Stomach (tissue), 19 donors: ENCODE measurements at regions of chr17 and their contacts with region 1.

Region 1: DNA sequence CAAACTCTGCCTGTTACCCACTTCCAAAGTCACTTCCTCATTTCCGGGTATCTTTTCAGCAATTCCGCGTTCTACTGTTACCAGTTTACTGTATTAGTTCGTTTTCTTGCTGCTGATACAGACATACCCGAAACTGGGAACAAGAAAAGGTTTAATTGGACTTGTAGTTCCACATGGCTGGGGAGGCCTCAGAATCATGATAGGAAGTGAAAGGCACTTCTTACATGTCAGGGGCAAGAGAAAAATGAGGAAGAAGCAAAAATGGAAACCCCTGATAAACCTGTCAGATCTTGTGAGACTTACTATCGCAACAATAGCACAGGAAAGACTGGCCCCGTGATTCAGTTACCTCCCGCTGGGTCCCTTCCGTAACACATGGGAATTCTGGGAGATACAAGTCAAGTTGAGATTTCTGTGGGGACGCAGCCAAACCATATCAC is 30.9 kb downstream of the PAFAH1B1 start:
- DNase-seq: no peak
- H3K4me3 ChIP-seq: no peak overlapping the region
- H3K27ac ChIP-seq: peak overlapping the region in 1 of 5 donors; percentile 11
- H3K4me1 ChIP-seq: peaks cover 4 to 95% (median 52%) of the 10 kb centered on the region in 4 donors
- H3K27me3 ChIP-seq: no peaks in the 10 kb centered on the region
- CTCF ChIP-seq: no peak
- EP300 ChIP-seq: no peak
- POLR2A ChIP-seq: no peak

Region 2: DNA sequence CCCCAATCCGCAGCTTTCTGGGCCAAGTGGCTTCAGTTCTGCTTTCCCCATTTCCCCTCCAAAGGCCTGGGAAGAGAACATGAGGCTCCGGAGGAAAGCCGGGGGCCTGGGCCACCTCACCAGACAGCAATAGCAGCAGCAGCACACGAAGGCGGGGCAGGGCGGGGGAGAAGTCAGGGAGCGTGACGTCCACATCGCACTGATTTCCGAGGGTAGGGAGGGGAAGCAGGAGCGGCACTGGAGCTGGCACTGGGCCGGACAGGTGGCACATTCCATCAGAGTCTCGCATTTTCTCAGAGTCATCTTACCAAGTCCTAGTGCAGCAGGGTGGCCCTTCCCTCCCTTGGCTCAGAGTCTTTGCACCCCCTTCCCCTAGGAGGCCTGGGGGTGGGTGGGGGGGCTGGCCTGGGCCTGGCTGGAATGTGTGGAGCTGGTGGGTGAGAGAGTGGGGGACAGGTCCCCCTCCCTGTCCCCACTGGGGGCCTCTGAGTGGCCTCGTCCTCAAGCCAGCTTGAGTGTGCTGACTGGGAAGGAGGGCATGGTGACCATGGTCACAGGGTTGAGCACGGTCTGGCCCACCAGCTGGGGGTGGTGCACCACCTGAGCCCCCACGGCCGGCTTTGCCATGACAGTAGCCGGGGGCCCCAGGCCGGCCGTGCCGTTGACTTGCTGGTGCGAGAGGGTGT is 237.8 kb before region 1 on chr17:
- intact Hi-C with region 1: no loop called
- DNase-seq: peak; percentile 76 to 89
- H3K4me3 ChIP-seq: no peak overlapping the region
- H3K27ac ChIP-seq: peak overlapping the region in 3 of 5 donors; percentile 37 to 55 (median 39)
- H3K4me1 ChIP-seq: peaks cover 35 to 80% (median 58%) of the 10 kb centered on the region in 4 donors
- H3K27me3 ChIP-seq: no peaks in the 10 kb centered on the region
- CTCF ChIP-seq: no peak
- EP300 ChIP-seq: no peak
- POLR2A ChIP-seq: no peak

Region 3: DNA sequence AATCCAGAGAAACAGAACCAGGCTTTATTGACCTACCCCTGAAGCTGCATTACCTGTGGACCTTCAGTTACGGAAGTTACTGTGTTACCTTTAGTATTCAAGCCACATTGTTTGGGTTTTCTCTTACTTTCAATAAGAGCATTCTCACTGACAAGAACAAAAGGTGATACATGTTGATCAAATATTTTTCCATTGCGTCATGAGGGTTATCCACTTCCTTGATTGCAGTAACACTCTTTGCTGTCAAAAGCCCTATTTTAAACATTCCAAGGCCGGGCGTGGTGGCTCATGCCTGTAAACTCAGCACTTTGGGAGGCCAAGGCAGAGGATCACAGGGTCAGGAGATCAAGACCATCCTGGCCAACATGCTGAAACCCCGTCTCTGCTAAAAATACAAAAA is 59.4 kb before region 1 on chr17:
- intact Hi-C with region 1: no loop called
- DNase-seq: peak; percentile 47 to 77
- H3K4me3 ChIP-seq: no peak overlapping the region
- H3K27ac ChIP-seq: peak overlapping the region; percentile 22 to 81 (median 56)
- H3K4me1 ChIP-seq: peaks cover 0 to 7% (median 3%) of the 10 kb centered on the region in 4 donors
- H3K27me3 ChIP-seq: no peaks in the 10 kb centered on the region
- CTCF ChIP-seq: no peak
- EP300 ChIP-seq: no peak
- POLR2A ChIP-seq: no peak

Region 4: DNA sequence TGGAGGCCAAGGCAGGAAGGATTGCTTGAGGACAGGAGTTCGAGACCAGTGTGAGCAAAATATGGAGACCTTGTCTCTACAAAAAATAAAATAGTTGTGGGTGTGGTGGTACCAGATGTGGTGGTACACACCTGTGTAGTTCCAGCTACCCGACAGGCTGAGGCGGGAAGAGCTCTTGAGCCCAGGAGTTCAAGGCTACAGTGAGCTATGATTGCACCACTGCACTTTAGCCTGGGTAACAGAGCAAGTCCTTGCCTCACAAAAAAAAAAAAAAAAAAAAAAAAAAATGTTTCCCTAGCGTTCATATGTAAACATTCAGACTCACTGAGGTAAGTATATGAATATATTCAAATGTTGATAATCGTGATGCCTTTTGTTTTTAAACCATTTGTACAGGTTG is 47.7 kb after region 1 on chr17:
- intact Hi-C with region 1: loop called (anchors 10 kb)
- DNase-seq: no peak
- H3K4me3 ChIP-seq: no peak overlapping the region
- H3K27ac ChIP-seq: no peak overlapping the region
- H3K4me1 ChIP-seq: no peaks in the 10 kb centered on the region
- H3K27me3 ChIP-seq: no peaks in the 10 kb centered on the region
- CTCF ChIP-seq: no peak
- EP300 ChIP-seq: no peak
- POLR2A ChIP-seq: no peak